ENCODE measurements at regions of chr2 and their contacts with region 1.

Region 1: GRCh38 chr2:224357098-224357901 is 44.6 kb downstream of the FAM124B start:
- DNase-seq: peak; percentile 79
- CTCF ChIP-seq: peak; percentile 73

Region 2: DNA sequence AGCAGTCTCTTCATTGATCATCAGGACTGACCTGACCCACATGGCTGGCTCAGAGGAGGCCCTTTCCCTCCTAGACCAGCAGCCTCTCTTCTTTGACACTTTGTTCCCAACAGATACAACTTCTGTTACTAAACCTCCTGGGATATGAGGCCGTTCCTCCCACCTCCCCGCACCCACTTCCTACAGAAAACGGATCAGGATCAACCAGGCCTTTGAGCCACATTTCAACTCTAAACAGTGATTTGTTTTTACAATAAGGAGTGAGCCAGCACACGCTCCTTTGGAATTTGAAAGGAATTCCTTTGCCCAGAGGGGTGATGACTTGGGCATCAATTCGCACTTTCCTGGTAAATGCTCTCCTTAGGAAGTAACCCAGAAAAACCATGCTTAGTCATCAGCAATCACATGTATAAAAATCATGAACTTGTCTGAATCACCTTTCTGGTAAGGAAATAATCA is 135.8 kb before region 1 on chr2:
- in situ Hi-C with region 1: no loop called
- DNase-seq: no peak
- CTCF ChIP-seq: no peak

Region 3: GRCh38 chr2:224778474-224778877 is 421.2 kb after region 1 on chr2:
- in situ Hi-C with region 1: loop called (anchors 10 kb)
- DNase-seq: peak; percentile 68
- CTCF ChIP-seq: peak; percentile 78

Region 4: GRCh38 chr2:225630824-225631533 is 1273.7 kb after region 1 on chr2:
- in situ Hi-C with region 1: no loop called
- DNase-seq: no peak
- CTCF ChIP-seq: no peak

Measured in GM13977 (cell line).